GM12878 (cell line): ENCODE measurements at regions of chr9 and their contacts with region 1.

Region 1: GRCh38 chr9:71911253-71912074 is at the start of gene C9orf85:
- DNase-seq: peak; percentile 98
- ATAC-seq: peak; percentile 94
- H3K4me3 ChIP-seq: peak within 1 kb of the TSS; percentile 91
- H3K27ac ChIP-seq: peak within 1 kb of the TSS; percentile 79
- H3K4me1 ChIP-seq: peaks cover 3% of the 10 kb centered on the region
- H3K27me3 ChIP-seq: no peaks in the 10 kb centered on the region
- CTCF ChIP-seq: no peak
- EP300 ChIP-seq: no peak
- POLR2A ChIP-seq: no peak
- RAD21 ChIP-seq: no peak
- polyA plus RNA-seq, gene C9orf85: 16.6 to 16.7 TPM

Region 2: DNA sequence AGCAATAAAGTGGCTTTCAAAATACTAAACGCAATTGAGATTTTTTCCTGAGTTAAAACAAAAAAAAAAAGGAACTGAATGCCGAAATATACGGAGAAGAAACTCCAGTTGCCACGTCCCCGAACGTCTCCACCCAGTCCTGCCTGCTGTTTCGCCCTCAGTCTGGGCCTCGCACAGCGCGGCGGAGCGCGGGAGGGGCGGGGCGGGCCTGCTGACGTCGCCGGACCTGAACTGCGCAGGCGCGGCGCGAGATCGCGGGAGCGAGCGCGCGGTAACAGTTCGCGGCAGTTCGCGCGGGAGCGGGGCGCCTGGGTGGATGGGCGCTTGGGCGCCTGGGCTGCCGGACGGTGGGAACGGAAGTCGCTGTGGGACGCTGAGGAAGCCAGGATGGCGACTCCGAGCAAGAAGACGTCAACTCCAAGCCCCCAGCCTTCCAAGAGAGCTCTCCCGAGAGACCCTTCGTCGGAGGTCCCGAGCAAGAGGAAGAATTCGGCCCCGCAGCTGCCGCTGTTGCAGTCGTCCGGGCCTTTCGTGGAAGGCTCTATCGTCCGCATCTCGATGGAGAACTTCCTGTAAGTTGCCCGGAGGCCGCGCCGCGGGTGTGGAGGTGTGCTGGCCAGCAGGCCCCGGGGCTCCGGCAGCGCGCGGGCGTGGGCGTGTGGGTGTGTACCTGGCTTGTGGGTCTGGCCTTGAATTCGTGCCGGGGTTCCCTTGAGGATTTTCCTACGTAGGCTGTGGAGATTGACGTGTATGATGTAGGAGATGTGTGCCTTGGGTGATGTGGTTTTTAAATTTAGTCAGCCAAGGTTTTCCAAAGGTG is 1652.6 kb before region 1 on chr9 and contains the start of gene SMC5:
- CTCF ChIA-PET with region 1: no interaction called
- POLR2A ChIA-PET with region 1: no interaction called
- RAD21 ChIA-PET with region 1: no interaction called
- SMC1A ChIA-PET with region 1: no interaction called
- in situ Hi-C with region 1: loop called (anchors 25 kb)
- intact Hi-C with region 1: no loop called
- DNase-seq: peak; percentile 80
- ATAC-seq: peak; percentile 84
- H3K4me3 ChIP-seq: peak within 1 kb of the TSS; percentile 85
- H3K27ac ChIP-seq: peak within 1 kb of the TSS; percentile 93
- H3K4me1 ChIP-seq: peaks cover 14% of the 10 kb centered on the region
- H3K27me3 ChIP-seq: no peaks in the 10 kb centered on the region
- CTCF ChIP-seq: no peak
- EP300 ChIP-seq: peak; percentile 43 to 76; a peak in 2 of 4 replicates
- POLR2A ChIP-seq: peak; percentile 99
- RAD21 ChIP-seq: no peak
- polyA plus RNA-seq, gene SMC5: 6.5 to 7.2 TPM

Region 3: GRCh38 chr9:71741711-71742648 is 169.5 kb before region 1 on chr9:
- CTCF ChIA-PET with region 1: no interaction called
- POLR2A ChIA-PET with region 1: no interaction called
- RAD21 ChIA-PET with region 1: no interaction called
- SMC1A ChIA-PET with region 1: no interaction called
- in situ Hi-C with region 1: no loop called
- intact Hi-C with region 1: no loop called
- DNase-seq: no peak
- ATAC-seq: no peak
- H3K4me3 ChIP-seq: no peak overlapping the region
- H3K27ac ChIP-seq: no peak overlapping the region
- H3K4me1 ChIP-seq: no peaks in the 10 kb centered on the region
- H3K27me3 ChIP-seq: no peaks in the 10 kb centered on the region
- CTCF ChIP-seq: no peak
- EP300 ChIP-seq: no peak
- POLR2A ChIP-seq: no peak
- RAD21 ChIP-seq: no peak

Region 4: GRCh38 chr9:71897577-71897976 is 13.9 kb before region 1 on chr9:
- CTCF ChIA-PET with region 1: interaction called, 8 read pairs
- POLR2A ChIA-PET with region 1: interaction called, 8 read pairs
- RAD21 ChIA-PET with region 1: interaction called, 22 read pairs
- SMC1A ChIA-PET with region 1: interaction called, 13 read pairs
- in situ Hi-C with region 1: no loop called
- intact Hi-C with region 1: loop called (anchors 2 kb)
- DNase-seq: no peak
- ATAC-seq: peak; percentile 52
- H3K4me3 ChIP-seq: no peak overlapping the region
- H3K27ac ChIP-seq: no peak overlapping the region
- H3K4me1 ChIP-seq: peaks cover 49% of the 10 kb centered on the region
- H3K27me3 ChIP-seq: no peaks in the 10 kb centered on the region
- CTCF ChIP-seq: no peak
- EP300 ChIP-seq: no peak
- POLR2A ChIP-seq: no peak
- RAD21 ChIP-seq: no peak

Region 5: DNA sequence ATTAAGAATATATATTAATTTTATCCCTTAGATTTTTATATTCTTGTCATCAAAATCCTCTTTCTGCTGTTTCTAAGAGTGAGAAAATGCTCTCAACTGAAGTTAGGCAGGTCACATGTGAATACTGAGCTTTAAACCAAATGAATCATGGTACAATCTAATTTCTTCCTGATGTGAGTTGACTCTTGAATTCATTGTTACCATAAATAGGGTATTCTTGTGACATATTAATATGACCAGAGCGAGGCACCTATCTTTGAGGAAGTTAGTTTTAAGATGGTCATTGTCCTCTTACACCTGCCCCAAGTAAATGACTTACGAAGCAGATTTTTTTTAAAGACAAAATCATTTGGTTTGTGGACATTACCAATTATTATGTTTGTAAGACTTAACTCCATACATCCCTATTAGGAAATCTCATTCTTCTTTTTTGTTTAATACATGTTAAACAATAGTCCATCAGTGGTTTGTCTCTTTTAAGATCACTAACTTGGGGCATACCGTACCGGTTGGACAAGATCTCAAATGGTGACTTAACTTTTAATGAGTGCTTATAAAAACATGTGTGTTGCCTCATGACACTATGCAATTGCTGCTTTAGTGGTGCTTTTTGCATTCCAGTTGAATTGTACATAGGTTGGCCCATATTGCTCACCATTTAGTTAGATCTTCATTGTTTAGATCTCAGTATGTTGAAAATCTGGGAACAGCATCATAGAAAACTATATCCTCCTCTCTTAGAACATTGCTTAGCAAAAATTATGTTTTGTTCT is 17.6 kb after region 1 on chr9:
- CTCF ChIA-PET with region 1: interaction called, 7 read pairs
- POLR2A ChIA-PET with region 1: interaction called, 4 read pairs
- RAD21 ChIA-PET with region 1: interaction called, 6 read pairs
- SMC1A ChIA-PET with region 1: interaction called, 77 read pairs
- in situ Hi-C with region 1: no loop called
- intact Hi-C with region 1: no loop called
- DNase-seq: no peak
- ATAC-seq: no peak
- H3K4me3 ChIP-seq: no peak overlapping the region
- H3K27ac ChIP-seq: no peak overlapping the region
- H3K4me1 ChIP-seq: no peaks in the 10 kb centered on the region
- H3K27me3 ChIP-seq: no peaks in the 10 kb centered on the region
- CTCF ChIP-seq: no peak
- EP300 ChIP-seq: no peak
- POLR2A ChIP-seq: no peak
- RAD21 ChIP-seq: no peak

Region 6: DNA sequence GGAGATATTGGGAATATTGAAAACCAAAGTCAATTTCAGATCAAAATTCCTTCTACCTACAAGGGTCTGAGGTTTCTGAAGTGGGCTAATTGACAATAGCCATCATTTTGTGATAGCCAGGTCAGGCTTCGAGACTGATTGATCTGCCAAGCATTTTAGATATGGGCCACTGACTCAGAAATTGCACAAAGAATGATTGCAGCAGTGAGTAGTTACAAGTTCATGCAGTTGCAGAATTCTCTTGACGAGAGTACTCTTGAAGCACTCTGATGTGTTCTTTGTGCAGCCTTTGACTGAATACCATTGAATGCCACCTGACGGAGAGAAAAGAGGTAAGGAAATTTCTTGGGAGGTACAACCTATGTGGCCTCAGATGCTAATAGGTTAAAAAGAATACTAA is 140.7 kb after region 1 on chr9:
- CTCF ChIA-PET with region 1: no interaction called
- POLR2A ChIA-PET with region 1: no interaction called
- RAD21 ChIA-PET with region 1: no interaction called
- SMC1A ChIA-PET with region 1: no interaction called
- in situ Hi-C with region 1: no loop called
- intact Hi-C with region 1: no loop called
- DNase-seq: no peak
- ATAC-seq: no peak
- H3K4me3 ChIP-seq: no peak overlapping the region
- H3K27ac ChIP-seq: no peak overlapping the region
- H3K4me1 ChIP-seq: no peaks in the 10 kb centered on the region
- H3K27me3 ChIP-seq: no peaks in the 10 kb centered on the region; a peak in 1 of 4 replicates
- CTCF ChIP-seq: no peak
- EP300 ChIP-seq: no peak
- POLR2A ChIP-seq: no peak
- RAD21 ChIP-seq: no peak

Region 7: GRCh38 chr9:72193478-72193881 is 282.0 kb after region 1 on chr9:
- CTCF ChIA-PET with region 1: no interaction called
- POLR2A ChIA-PET with region 1: no interaction called
- RAD21 ChIA-PET with region 1: no interaction called
- SMC1A ChIA-PET with region 1: no interaction called
- in situ Hi-C with region 1: no loop called
- intact Hi-C with region 1: loop called (anchors 5 kb)
- DNase-seq: no peak
- ATAC-seq: peak; percentile 98
- H3K4me3 ChIP-seq: no peak overlapping the region
- H3K27ac ChIP-seq: no peak overlapping the region
- H3K4me1 ChIP-seq: no peaks in the 10 kb centered on the region; the same call in 1 of the 2 replicates
- H3K27me3 ChIP-seq: no peaks in the 10 kb centered on the region
- CTCF ChIP-seq: no peak
- EP300 ChIP-seq: no peak
- POLR2A ChIP-seq: no peak
- RAD21 ChIP-seq: no peak